GM10248 (cell line): ENCODE measurements at regions of chr16 and their contacts with region 1.

Region 1: DNA sequence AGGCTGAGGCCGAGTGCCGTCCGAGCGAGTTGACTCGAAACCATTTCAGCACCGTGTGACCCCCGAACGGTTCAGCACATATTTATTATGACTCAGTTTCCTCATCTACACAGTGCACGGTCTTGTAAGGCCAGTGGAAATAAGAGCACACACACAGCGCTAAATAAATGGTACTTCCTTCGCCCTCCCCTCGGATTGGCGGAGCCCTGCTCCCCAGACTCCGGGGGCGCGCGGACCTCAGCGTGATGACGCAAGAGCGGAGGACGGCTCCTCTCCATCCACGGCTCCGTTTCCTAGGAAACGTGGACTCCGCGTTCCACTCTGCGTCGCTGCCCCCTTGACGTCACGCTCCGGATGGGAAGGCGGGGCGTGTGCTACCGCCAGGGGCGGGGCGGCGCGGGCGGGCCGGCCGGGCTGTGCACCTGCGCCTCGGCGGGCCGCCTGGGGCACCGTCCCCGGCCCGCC is at the start of gene PARD6A:
- DNase-seq: peak; percentile 100
- CTCF ChIP-seq: no peak

Region 2: GRCh38 chr16:67499106-67499505 is 161.5 kb before region 1 on chr16:
- CTCF ChIA-PET with region 1: interaction called, 10 read pairs
- POLR2A ChIA-PET with region 1: no interaction called
- DNase-seq: no peak
- CTCF ChIP-seq: no peak

Region 3: GRCh38 chr16:67632415-67633172 is 28.0 kb before region 1 on chr16:
- CTCF ChIA-PET with region 1: no interaction called
- POLR2A ChIA-PET with region 1: no interaction called
- DNase-seq: no peak
- CTCF ChIP-seq: no peak

Region 4: GRCh38 chr16:67685388-67686112 is 25.0 kb after region 1 on chr16:
- CTCF ChIA-PET with region 1: no interaction called
- POLR2A ChIA-PET with region 1: no interaction called
- DNase-seq: peak; percentile 37
- CTCF ChIP-seq: no peak